Thyroid gland (tissue), 4 donors: ENCODE measurements at regions of chr11 and their contacts with region 1.

Region 1: DNA sequence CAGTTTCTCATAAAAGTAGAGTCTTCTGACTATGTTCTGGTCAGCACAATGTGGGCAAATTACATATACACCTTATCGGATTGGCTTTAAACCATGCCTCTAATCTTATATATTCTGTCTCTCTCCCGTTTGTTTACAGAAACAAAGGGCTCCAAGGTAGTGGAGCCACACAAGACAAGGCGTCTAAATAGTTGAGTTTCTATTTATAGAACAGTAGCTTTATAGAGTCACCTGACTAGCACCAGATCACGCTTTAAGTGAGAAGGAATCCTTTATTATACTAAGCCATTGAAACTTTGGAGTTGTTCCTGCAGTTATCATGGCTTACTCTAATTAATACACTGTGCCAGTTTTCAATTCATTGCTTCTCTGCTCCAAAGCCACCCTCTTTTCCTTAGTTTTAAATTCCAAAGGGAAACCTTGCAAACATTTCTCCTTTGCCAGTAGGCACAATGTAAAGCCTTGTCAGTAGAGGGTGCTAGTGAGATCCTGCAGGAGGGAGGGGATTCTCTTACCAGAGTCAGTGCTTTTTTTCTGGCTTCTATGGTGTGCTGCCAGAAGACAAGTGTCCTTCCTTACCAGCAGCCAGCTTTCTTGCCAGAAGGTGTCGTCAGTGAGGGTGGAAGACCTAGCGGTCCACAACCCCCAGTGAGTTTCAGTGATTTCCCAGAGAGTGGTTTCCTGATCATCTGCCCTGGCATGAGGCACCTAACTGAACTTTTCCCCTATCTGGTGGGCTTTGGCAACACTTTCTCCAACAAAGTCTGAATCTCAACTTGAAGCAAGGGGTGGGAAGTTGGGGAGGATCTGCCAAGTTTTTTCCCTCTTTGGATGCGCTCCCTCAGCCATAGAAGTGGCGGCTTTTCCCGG is 71.7 kb downstream of the RAB38 start:
- DNase-seq: peak; percentile 65 to 69
- H3K4me3 ChIP-seq: no peak overlapping the region
- H3K27ac ChIP-seq: no peak overlapping the region
- H3K4me1 ChIP-seq: no peaks in the 10 kb centered on the region
- H3K27me3 ChIP-seq: no peaks in the 10 kb centered on the region
- CTCF ChIP-seq: peak; percentile 18 to 58 (median 38)
- POLR2A ChIP-seq: no peak

Region 2: DNA sequence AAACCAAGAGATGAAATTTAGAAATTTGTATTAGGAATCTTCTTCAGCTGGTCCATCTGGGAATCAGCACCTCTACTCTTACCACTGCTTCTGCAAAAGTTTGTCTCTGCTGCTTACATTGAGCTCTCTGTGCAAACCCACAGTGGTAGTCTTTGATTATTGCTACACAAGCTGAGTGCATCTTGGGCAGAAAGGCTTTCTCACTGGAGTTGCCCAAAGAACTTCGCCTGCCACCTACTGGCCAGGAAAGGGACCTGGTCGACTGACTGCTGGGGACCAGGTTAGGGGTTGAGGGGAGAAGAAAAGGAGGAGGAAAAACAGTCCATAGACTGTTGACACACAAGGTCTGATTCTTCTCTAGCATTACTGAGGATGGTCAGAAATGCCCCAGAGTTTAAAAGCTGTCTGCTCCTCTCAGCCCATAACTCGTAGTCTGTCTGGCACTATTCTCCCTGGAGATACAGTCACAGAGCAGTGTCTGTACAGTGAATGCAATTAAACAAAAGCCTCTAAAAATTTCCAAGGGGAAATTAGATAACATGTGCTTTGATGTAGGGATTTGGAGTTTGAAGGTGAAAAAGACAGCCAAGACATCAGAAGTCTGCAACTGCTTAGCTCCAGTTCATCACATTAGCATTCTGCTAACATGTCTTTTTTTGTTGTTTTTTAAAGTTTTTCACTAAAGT is 448.9 kb after region 1 on chr11:
- intact Hi-C with region 1: loop called (anchors 10 kb)
- DNase-seq: peak; percentile 3 to 24
- H3K4me3 ChIP-seq: no peak overlapping the region
- H3K27ac ChIP-seq: no peak overlapping the region
- H3K4me1 ChIP-seq: peaks cover 0 to 5% of the 10 kb centered on the region in 2 donors
- H3K27me3 ChIP-seq: no peaks in the 10 kb centered on the region
- CTCF ChIP-seq: peak in 2 of 6 experiments; percentile 40 to 51
- POLR2A ChIP-seq: no peak